Naive thymus-derived CD4-positive, alpha-beta T cell (primary cell): ENCODE measurements at regions of chr19 and their contacts with region 1.

Region 1: DNA sequence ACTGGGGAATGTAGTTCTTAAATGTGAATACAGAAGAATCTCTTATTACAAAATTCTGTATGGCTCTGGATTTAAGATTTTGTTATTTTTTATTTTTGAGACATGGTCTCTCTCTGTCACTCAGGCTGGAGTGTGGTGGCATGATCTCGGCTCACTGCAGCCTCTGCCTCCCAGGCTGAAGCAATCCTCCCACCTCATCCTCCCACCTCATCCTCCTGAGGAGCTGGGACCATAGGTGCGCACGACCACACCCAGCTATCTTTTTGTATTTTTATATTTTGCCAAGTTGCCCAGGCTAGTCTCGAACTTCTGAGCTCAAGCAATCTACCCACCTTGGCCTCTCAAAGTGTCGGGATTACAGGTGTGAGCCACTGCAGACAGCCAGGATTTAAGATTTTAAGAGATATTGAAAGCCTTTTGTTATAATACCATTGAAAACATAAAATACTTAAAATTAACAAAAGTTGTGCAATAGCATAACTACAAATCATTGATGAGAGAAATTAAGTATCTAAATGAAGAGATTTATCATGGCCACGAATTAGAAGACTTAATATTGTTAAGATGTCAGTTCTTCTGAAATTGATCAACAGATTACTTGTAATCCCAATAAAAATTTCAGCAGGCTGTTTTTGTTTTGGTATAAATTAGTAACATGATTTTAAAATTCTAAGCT is 13.4 kb downstream of the CYP2A6 start:
- DNase-seq: no peak
- ATAC-seq: no peak
- H3K4me3 ChIP-seq: no peak overlapping the region
- H3K4me3 Mint-ChIP-seq: no peak overlapping the region
- H3K27ac ChIP-seq: no peak overlapping the region
- H3K27ac Mint-ChIP-seq: no peak overlapping the region
- H3K4me1 ChIP-seq: no peaks in the 10 kb centered on the region
- H3K4me1 Mint-ChIP-seq: peaks cover 0 to 20% (median 14%) of the 10 kb centered on the region in 7 donors
- H3K27me3 ChIP-seq: no peaks in the 10 kb centered on the region
- H3K27me3 Mint-ChIP-seq: peaks cover 0 to 33% (median 0%) of the 10 kb centered on the region in 5 donors

Region 2: DNA sequence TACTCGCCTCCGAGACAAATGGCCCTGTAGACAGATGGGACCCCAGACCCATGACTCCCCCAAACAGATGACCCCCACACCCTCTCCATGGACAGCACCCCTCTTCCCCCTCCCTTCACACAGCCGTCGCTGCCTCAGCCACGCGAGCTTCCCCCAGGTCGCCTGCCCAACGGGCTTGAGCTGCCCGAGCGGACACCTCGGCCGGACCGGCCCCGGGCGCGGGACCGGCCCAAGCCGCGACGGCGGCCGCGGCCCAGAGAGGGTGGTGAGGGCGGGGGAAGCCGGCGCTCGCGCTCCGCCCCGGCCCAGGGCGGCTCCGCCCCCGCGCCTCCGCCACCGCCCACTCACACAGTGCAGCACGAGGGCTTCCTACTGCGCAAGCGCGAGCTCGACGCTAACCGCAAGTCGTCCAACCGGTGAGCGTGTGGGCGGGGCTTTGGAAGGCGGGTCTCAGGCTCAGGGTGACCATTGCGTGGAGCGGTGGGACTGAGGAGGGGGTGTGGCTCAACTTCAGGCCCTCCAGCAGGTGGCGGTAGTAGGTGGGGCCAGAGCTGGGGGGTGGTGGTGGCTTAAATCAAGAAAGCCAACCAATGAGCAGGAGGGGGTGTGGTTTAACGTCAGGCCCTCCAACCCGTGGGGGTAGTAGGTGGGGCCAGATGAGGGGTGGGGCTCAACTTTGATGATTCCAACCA is 266.4 kb before region 1 on chr19:
- CTCF ChIA-PET with region 1: no interaction called
- POLR2A ChIA-PET with region 1: no interaction called
- intact Hi-C with region 1: no loop called
- DNase-seq: peak; percentile 90 to 97 (median 96)
- ATAC-seq: peak; percentile 94
- H3K4me3 ChIP-seq: peak overlapping the region; percentile 45
- H3K4me3 Mint-ChIP-seq: peak overlapping the region; percentile 50 to 85 (median 82)
- H3K27ac ChIP-seq: no peak overlapping the region
- H3K27ac Mint-ChIP-seq: peak overlapping the region; percentile 55 to 93 (median 81)
- H3K4me1 ChIP-seq: peaks cover 9 to 13% of the 10 kb centered on the region in 2 donors
- H3K4me1 Mint-ChIP-seq: peaks cover 10 to 27% (median 19%) of the 10 kb centered on the region in 7 donors
- H3K27me3 ChIP-seq: no peaks in the 10 kb centered on the region
- H3K27me3 Mint-ChIP-seq: peaks cover 9 to 41% (median 17%) of the 10 kb centered on the region in 5 donors

Region 3: GRCh38 chr19:40623403-40624251 is 213.3 kb before region 1 on chr19:
- CTCF ChIA-PET with region 1: no interaction called
- POLR2A ChIA-PET with region 1: no interaction called
- intact Hi-C with region 1: no loop called
- DNase-seq: no peak
- ATAC-seq: no peak
- H3K4me3 ChIP-seq: no peak overlapping the region
- H3K4me3 Mint-ChIP-seq: no peak overlapping the region
- H3K27ac ChIP-seq: no peak overlapping the region
- H3K27ac Mint-ChIP-seq: peak overlapping the region in 1 of 9 donors; percentile 62
- H3K4me1 ChIP-seq: no peaks in the 10 kb centered on the region
- H3K4me1 Mint-ChIP-seq: peaks cover 0 to 15% (median 3%) of the 10 kb centered on the region in 7 donors
- H3K27me3 ChIP-seq: no peaks in the 10 kb centered on the region
- H3K27me3 Mint-ChIP-seq: no peaks in the 10 kb centered on the region

Region 4: DNA sequence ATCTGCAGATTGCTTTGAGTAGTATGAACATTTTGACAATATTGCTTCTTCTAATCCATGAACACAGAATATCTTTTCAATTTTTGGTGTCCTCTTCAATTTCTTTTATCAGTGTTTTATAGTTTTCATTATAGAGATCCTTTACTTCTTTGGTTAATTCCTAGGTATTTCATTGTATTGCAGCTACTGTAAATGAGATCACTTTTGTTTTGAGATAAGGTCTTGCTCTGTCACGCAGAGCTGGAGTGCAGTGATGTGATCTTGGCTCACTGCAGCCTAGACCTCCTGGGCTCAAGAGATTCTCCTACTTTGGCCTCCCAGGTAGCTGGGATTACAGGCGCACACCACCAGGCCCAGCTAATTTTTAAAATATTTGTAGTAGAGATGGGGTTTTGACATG is 35.3 kb after region 1 on chr19:
- CTCF ChIA-PET with region 1: no interaction called
- POLR2A ChIA-PET with region 1: no interaction called
- intact Hi-C with region 1: loop called in 1 of 2 experiments (anchors 2 kb)
- DNase-seq: no peak
- ATAC-seq: no peak
- H3K4me3 ChIP-seq: no peak overlapping the region
- H3K4me3 Mint-ChIP-seq: no peak overlapping the region
- H3K27ac ChIP-seq: no peak overlapping the region
- H3K27ac Mint-ChIP-seq: no peak overlapping the region
- H3K4me1 ChIP-seq: peaks cover 0 to 9% of the 10 kb centered on the region in 2 donors
- H3K4me1 Mint-ChIP-seq: peaks cover 10 to 19% (median 14%) of the 10 kb centered on the region in 7 donors
- H3K27me3 ChIP-seq: no peaks in the 10 kb centered on the region
- H3K27me3 Mint-ChIP-seq: peaks cover 0 to 58% (median 7%) of the 10 kb centered on the region in 5 donors